CD14-positive monocyte (primary cell): ENCODE measurements at regions of chr19 and their contacts with region 1.

Region 1: GRCh38 chr19:10120538-10121189 is 965 bp upstream of the EIF3G start:
- DNase-seq: no peak
- H3K4me3 ChIP-seq: no peak overlapping the region
- H3K4me3 Mint-ChIP-seq: no peak overlapping the region
- H3K27ac ChIP-seq: no peak overlapping the region
- H3K27ac Mint-ChIP-seq: peak overlapping the region in 1 of 7 donors; percentile 60
- H3K4me1 ChIP-seq: peaks cover 33 to 44% of the 10 kb centered on the region in 2 donors
- H3K4me1 Mint-ChIP-seq: peaks cover 28% of the 10 kb centered on the region
- H3K27me3 ChIP-seq: no peaks in the 10 kb centered on the region
- H3K27me3 Mint-ChIP-seq: no peaks in the 10 kb centered on the region
- CTCF ChIP-seq: no peak

Region 2: DNA sequence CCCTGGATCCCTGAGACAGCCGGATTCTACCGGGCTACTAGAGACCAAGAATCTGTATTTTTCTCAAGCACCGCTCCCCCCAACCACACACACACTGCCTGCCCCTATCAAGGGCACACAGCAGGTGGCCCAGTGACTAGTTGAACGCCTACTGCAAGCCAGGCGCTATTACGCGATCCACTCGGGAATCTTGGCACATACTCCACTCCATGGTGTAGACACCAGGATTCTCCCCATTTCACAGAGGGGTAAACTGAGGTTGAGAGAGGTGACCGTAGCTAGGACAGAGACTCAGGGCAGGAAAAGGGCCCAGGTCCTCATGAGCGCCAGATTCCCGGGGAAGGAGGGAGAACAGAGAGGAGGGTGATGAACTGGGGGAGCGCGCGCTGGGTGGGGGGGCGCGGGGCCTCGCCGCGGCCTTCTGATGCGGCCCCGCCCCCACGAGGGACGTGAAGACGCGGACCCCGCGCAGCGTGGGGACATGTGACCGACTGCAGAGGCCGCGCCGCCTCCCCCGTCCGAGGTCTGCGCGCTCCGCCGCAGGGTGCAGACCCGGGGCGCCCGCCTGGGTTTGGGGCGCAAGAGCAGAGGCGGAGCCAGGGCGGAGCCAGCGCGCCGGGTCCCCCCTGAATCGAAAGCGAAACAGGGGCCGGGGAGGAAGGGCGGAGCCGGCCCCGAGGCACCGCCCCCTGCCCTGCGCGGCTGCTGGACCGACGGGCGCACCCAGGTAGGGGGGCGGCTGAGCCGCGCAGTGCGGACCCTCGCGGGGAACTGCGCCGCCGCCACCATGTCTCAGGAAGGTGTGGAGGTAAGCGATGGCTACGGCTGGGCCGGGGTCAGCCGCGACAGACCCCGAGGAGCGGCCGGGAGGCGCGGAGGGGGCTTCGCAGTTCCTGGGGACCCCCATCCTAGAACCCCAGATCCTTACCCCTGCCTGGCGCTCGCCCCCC is 34.7 kb before region 1 on chr19 and contains the start of gene SHFL:
- intact Hi-C with region 1: no loop called
- DNase-seq: peak; percentile 66 to 75 (median 70)
- H3K4me3 ChIP-seq: peak within 1 kb of the TSS; percentile 89 to 95 (median 89)
- H3K4me3 Mint-ChIP-seq: peak within 1 kb of the TSS; percentile 85 to 86
- H3K27ac ChIP-seq: peak within 1 kb of the TSS in 1 of 2 donors; percentile 78
- H3K27ac Mint-ChIP-seq: peak within 1 kb of the TSS in 6 of 7 donors; percentile 54 to 85 (median 74)
- H3K4me1 ChIP-seq: peaks cover 9 to 20% of the 10 kb centered on the region in 2 donors
- H3K4me1 Mint-ChIP-seq: peaks cover 9% of the 10 kb centered on the region
- H3K27me3 ChIP-seq: no peaks in the 10 kb centered on the region
- H3K27me3 Mint-ChIP-seq: peaks cover 7 to 13% (median 7%) of the 10 kb centered on the region in 3 donors
- CTCF ChIP-seq: no peak
- polyA plus RNA-seq, gene SHFL: 12.6 to 106 (median 17.6) TPM

Region 3: DNA sequence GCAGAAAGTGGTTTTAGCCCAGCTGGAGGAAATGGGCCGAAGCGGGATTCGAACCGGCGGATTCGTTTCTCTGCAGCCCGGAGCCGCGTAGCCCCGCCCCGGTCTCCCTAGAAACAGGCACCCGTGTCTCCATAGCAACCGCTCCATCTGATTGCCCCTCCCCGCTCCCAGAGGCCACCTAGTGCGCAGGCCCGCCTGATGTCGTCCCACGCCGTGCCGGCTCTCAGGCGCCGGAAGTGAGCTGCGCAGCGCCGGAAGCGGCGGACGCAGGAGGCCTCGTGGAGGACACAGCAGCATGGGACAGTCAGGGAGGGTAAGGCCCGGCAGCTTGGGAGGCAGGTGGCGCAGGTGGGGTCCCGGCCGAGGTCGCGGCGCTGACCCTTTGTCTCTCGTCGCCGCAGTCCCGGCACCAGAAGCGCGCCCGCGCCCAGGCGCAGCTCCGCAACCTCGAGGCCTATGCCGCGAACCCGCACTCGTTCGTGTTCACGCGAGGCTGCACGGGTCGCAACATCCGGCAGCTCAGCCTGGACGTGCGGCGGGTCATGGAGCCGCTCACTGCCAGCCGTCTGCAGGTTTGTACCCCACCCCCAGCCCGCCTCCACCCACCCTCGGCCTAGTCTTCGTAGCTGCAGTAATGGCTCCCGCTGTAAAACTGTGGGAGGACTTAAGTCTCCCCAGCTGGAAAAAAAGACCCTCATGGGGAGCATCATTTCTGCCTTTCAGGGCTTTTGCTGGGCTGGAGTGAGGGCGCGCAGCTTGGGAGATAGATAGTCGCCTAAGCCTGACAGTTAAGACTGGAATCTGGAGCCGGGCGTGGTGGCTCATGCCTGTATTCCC is 14.3 kb before region 1 on chr19 and contains the start of gene PPAN:
- intact Hi-C with region 1: loop called in 1 of 2 experiments (anchors 1 kb)
- DNase-seq: peak; percentile 98 to 99 (median 99)
- H3K4me3 ChIP-seq: peak within 1 kb of the TSS; percentile 49 to 77 (median 62)
- H3K4me3 Mint-ChIP-seq: peak within 1 kb of the TSS; percentile 72 to 83
- H3K27ac ChIP-seq: peak within 1 kb of the TSS in 1 of 2 donors; percentile 72
- H3K27ac Mint-ChIP-seq: peak within 1 kb of the TSS; percentile 65 to 92 (median 85)
- H3K4me1 ChIP-seq: peaks cover 50 to 63% of the 10 kb centered on the region in 2 donors
- H3K4me1 Mint-ChIP-seq: peaks cover 52% of the 10 kb centered on the region
- H3K27me3 ChIP-seq: no peaks in the 10 kb centered on the region
- H3K27me3 Mint-ChIP-seq: peaks cover 1 to 5% (median 3%) of the 10 kb centered on the region in 3 donors
- CTCF ChIP-seq: no peak
- polyA plus RNA-seq, gene PPAN: 7.2 to 26.2 (median 7.6) TPM